Activated CD4-positive, alpha-beta memory T cell treated with anti-CD3 and anti-CD28 coated beads for 36 hours (primary cell): ENCODE measurements at regions of chr11 and their contacts with region 1.

Region 1: GRCh38 chr11:44596525-44597276 is 31.2 kb downstream of the CD82 start:
- DNase-seq: peak; percentile 88
- H3K4me3 Mint-ChIP-seq: peak overlapping the region; percentile 63
- H3K27ac Mint-ChIP-seq: peak overlapping the region; percentile 90
- H3K4me1 Mint-ChIP-seq: peaks cover 86% of the 10 kb centered on the region
- H3K27me3 Mint-ChIP-seq: no peaks in the 10 kb centered on the region

Region 2: GRCh38 chr11:44574610-44575287 is 22.0 kb before region 1 on chr11:
- CTCF ChIA-PET with region 1: interaction called, 7 read pairs
- POLR2A ChIA-PET with region 1: interaction called, 8 read pairs
- intact Hi-C with region 1: loop called (anchors 1 kb)
- DNase-seq: peak; percentile 72
- H3K4me3 Mint-ChIP-seq: peak overlapping the region; percentile 57
- H3K27ac Mint-ChIP-seq: peak overlapping the region; percentile 99
- H3K4me1 Mint-ChIP-seq: peaks cover 98% of the 10 kb centered on the region
- H3K27me3 Mint-ChIP-seq: no peaks in the 10 kb centered on the region